CD8-positive, alpha-beta T cell (primary cell): ENCODE measurements at regions of chr6 and their contacts with region 1.

Region 1: GRCh38 chr6:33271458-33272274 is at the starts of genes RPS18 and VPS52:
- DNase-seq: peak; percentile 82 to 99 (median 90)
- ATAC-seq: peak; percentile 85
- H3K4me3 ChIP-seq: peak within 1 kb of the TSS; percentile 74 to 82
- H3K4me3 Mint-ChIP-seq: peak within 1 kb of the TSS; percentile 100
- H3K27ac ChIP-seq: peak within 1 kb of the TSS; percentile 87 to 95
- H3K27ac Mint-ChIP-seq: peak within 1 kb of the TSS; percentile 100
- H3K4me1 ChIP-seq: peaks cover 44% of the 10 kb centered on the region
- H3K4me1 Mint-ChIP-seq: peaks cover 62% of the 10 kb centered on the region
- H3K27me3 ChIP-seq: no peaks in the 10 kb centered on the region
- H3K27me3 Mint-ChIP-seq: no peaks in the 10 kb centered on the region
- CTCF ChIP-seq: no peak
- total RNA-seq, gene RPS18: 4,154 to 4,290 TPM
- total RNA-seq, gene VPS52: 72.2 to 75.9 TPM

Region 2: DNA sequence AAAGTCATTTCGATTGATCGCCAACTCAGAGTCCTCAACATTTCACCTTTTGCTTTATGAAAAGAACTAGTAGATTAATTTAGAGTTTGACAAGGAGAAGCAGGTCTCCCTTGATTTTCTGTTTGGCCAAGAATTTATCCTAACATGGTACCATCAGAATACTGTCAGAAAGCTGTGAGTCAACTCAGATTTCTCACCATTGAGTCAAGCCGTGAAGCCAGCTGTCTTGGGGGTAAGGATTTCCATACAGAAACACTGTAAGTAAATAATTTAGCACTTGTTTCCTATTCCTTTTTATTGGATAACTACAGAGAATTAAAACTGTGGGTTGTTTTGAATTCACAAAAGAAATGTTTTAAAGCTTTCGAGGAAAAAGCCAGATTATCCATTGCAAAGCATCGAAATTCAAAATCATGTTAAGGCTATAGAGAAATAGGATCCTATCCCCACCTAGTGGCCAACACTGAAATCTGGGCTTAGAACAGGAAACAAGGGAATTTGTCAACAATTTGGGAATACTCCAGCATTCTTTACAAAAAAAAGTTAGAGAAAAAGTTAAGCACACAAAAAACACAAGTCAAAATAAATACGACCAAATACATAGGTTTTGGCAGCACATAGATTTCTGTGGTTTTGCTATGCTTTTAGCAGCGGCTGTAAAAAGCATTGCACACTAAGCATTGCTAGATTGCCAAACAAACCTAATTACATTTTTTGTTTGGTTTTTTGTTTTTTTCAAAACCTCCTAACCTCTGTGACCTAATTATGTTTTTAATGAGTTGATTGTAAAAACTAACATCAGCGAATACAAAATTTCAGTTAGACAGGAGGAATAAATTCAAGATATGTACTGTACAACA is 123.6 kb before region 1 on chr6:
- CTCF ChIA-PET with region 1: no interaction called
- POLR2A ChIA-PET with region 1: no interaction called
- intact Hi-C with region 1: no loop called
- DNase-seq: peak in 2 of 9 experiments; percentile 42 to 52
- ATAC-seq: no peak
- H3K4me3 ChIP-seq: no peak overlapping the region
- H3K4me3 Mint-ChIP-seq: no peak overlapping the region
- H3K27ac ChIP-seq: no peak overlapping the region
- H3K27ac Mint-ChIP-seq: no peak overlapping the region
- H3K4me1 ChIP-seq: no peaks in the 10 kb centered on the region
- H3K4me1 Mint-ChIP-seq: peaks cover 2% of the 10 kb centered on the region
- H3K27me3 ChIP-seq: no peaks in the 10 kb centered on the region
- H3K27me3 Mint-ChIP-seq: peaks cover 18% of the 10 kb centered on the region
- CTCF ChIP-seq: peak; percentile 71

Region 3: DNA sequence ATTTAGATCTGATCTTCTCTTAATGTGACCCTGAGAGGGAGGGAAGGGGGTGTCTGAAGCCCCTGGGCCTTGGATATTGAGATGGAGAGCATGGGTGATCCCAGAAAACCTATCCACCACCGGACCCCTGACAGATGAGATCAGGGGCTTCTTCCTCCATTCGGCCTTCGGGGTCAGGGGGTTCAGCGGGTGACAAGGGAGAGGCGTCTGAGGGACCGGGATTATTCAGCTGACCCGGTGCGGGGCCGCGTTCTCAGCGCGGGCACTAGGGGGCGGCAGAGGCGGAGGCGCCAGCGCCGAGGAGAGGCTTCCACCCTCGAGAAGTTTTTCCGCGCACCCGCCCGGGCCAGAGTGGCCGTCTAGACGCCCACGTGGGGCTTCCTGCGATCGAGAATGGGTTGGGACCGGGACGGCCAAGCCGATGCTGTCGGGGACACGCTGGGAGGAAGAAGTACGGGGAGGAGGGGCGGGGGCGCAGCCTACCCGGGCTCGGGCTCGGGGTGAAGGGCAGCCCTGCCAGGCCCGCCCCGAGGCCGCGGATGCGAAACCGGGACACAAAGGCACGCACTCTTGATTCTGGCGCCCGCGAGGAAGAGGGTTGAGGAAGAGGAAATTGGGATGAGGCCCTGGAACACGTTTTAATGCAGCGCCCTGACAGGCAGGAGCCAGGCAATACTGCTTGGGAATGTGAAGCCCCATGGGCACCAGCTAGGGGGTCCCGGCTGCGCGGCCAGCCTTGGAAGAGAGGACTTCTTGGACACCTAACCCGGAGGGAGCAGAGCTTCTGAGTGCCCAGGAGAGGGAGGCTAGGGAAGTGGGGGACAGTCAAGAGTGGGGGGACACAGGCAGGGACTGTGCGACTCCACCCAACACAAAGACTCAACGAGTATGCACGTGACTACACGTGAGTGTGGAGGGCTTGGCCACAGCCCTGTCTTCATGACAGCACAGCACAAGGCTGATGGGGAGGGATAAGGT is 110.0 kb before region 1 on chr6:
- CTCF ChIA-PET with region 1: no interaction called
- POLR2A ChIA-PET with region 1: no interaction called
- intact Hi-C with region 1: no loop called
- DNase-seq: peak; percentile 74 to 91 (median 85)
- ATAC-seq: peak; percentile 97
- H3K4me3 ChIP-seq: peak overlapping the region; percentile 50
- H3K4me3 Mint-ChIP-seq: peak overlapping the region; percentile 86
- H3K27ac ChIP-seq: no peak overlapping the region
- H3K27ac Mint-ChIP-seq: no peak overlapping the region
- H3K4me1 ChIP-seq: peaks cover 8% of the 10 kb centered on the region
- H3K4me1 Mint-ChIP-seq: peaks cover 14% of the 10 kb centered on the region
- H3K27me3 ChIP-seq: no peaks in the 10 kb centered on the region
- H3K27me3 Mint-ChIP-seq: peaks cover 4% of the 10 kb centered on the region
- CTCF ChIP-seq: peak; percentile 92

Region 4: DNA sequence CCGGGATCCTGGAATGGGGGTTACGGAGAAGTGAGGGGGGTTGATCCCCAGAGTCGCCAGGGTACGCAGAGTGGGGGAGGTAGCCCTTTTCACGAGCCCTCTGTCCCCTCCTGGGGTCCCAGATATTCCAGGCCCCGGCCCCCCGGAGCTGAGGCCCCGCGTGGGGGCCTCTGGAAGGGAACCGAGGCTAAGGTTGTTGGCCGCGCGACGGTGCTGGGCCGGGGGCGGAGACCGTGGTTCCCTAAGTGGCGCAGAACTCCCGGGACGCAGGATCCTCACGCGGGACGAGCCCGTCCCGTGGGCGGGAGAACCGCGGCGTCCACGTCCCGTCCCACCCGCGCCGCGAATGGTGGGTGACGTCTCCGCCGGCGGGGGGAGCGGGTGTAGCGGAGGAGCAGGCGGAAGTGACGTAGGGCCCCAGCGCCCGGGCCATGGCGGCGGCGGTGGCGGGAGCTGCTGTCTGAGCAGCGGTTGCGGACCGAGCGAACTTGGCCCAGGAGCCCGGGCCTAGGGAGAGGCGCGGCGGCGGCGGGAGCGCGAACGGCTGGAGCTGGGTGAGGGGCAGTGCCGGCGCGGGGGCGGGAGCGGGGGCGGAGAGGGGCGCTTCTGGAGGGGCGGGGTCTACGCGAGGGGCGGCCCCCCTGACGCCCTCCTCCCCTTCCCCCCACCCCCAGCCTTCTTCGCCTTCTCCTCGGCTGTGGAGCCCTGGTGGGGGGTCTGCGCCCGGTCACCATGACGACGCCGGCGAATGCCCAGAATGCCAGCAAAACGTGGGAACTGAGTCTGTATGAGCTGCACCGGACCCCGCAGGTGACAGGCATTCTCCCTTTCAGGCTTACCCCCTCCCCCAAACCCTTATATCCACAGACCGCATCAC is 63.3 kb before region 1 on chr6 and contains the start of gene RING1:
- CTCF ChIA-PET with region 1: interaction called, 3 read pairs
- POLR2A ChIA-PET with region 1: interaction called, 14 read pairs
- intact Hi-C with region 1: no loop called
- DNase-seq: peak; percentile 72 to 94 (median 87)
- ATAC-seq: peak; percentile 59
- H3K4me3 ChIP-seq: peak within 1 kb of the TSS; percentile 96 to 97
- H3K4me3 Mint-ChIP-seq: peak within 1 kb of the TSS; percentile 94
- H3K27ac ChIP-seq: peak within 1 kb of the TSS; percentile 91 to 98
- H3K27ac Mint-ChIP-seq: peak within 1 kb of the TSS; percentile 96
- H3K4me1 ChIP-seq: peaks cover 51% of the 10 kb centered on the region
- H3K4me1 Mint-ChIP-seq: peaks cover 57% of the 10 kb centered on the region
- H3K27me3 ChIP-seq: peaks cover 0 to 6% of the 10 kb centered on the region in 2 experiments
- H3K27me3 Mint-ChIP-seq: no peaks in the 10 kb centered on the region
- CTCF ChIP-seq: no peak
- total RNA-seq, gene RING1: 29.1 to 29.5 TPM

Region 5: GRCh38 chr6:33317669-33318425 is 46.2 kb after region 1 on chr6 and contains the start of gene ZBTB22:
- CTCF ChIA-PET with region 1: no interaction called
- POLR2A ChIA-PET with region 1: interaction called, 15 read pairs
- intact Hi-C with region 1: loop called (anchors 1 kb)
- DNase-seq: peak; percentile 91 to 98 (median 96)
- ATAC-seq: peak; percentile 61
- H3K4me3 ChIP-seq: peak within 1 kb of the TSS; percentile 72 to 78
- H3K4me3 Mint-ChIP-seq: peak within 1 kb of the TSS; percentile 99
- H3K27ac ChIP-seq: peak within 1 kb of the TSS; percentile 60 to 99
- H3K27ac Mint-ChIP-seq: peak within 1 kb of the TSS; percentile 97
- H3K4me1 ChIP-seq: peaks cover 65% of the 10 kb centered on the region
- H3K4me1 Mint-ChIP-seq: peaks cover 77% of the 10 kb centered on the region
- H3K27me3 ChIP-seq: no peaks in the 10 kb centered on the region
- H3K27me3 Mint-ChIP-seq: no peaks in the 10 kb centered on the region
- CTCF ChIP-seq: no peak
- total RNA-seq, gene ZBTB22: 8.8 to 9.3 TPM

Region 6: DNA sequence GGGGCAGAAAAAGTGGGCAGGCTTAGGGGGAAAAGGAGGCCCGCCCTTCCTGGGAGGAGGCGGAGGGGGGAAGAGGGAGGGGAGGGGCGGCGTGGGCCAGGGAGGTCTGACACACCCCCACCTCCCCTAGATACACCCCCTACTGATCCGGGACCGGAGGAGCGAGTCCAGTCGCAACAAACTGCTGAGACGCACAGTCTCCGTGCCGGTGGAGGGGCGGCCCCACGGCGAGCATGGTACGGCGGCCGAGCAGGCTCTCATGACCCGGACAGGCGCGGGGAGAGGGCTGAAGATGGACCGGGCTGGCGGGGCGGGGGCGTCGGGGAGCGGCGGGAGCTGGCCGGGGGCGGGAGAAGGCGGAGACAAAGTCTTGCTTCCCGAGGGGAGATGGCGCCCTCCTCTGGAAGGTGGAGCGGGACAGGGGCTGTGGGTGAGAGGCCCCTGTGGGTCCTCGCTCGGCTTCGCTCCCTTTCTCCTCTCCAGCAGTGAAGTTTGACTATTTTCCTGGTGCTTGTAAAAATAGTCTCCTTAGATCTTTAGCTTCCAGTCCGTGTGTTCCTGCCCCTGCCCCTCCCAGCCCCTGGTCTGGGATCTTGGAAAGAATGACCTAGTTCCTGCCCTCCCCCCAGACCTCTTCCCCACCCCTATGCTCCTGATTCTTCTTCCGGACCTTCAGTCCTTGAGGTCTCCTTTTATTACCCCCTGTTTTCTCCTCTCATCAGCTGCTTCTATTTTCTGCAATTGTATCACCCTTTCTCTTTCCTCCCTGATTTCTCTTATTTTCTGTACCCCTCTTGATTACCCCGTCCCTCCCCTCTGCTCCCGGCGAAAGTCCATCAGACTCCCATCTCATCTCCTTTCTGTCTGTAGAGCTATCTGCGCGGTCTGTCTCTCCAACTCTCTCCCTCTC is 154.3 kb after region 1 on chr6:
- CTCF ChIA-PET with region 1: no interaction called
- POLR2A ChIA-PET with region 1: interaction called, 17 read pairs
- intact Hi-C with region 1: loop called in 1 of 2 experiments (anchors 5 kb)
- DNase-seq: peak; percentile 57 to 92 (median 84)
- ATAC-seq: peak; percentile 64
- H3K4me3 ChIP-seq: peak overlapping the region; percentile 50 to 69
- H3K4me3 Mint-ChIP-seq: peak overlapping the region; percentile 87
- H3K27ac ChIP-seq: peak overlapping the region; percentile 77 to 91
- H3K27ac Mint-ChIP-seq: peak overlapping the region; percentile 90
- H3K4me1 ChIP-seq: peaks cover 55% of the 10 kb centered on the region
- H3K4me1 Mint-ChIP-seq: peaks cover 77% of the 10 kb centered on the region
- H3K27me3 ChIP-seq: no peaks in the 10 kb centered on the region
- H3K27me3 Mint-ChIP-seq: no peaks in the 10 kb centered on the region
- CTCF ChIP-seq: peak; percentile 40

Region 7: DNA sequence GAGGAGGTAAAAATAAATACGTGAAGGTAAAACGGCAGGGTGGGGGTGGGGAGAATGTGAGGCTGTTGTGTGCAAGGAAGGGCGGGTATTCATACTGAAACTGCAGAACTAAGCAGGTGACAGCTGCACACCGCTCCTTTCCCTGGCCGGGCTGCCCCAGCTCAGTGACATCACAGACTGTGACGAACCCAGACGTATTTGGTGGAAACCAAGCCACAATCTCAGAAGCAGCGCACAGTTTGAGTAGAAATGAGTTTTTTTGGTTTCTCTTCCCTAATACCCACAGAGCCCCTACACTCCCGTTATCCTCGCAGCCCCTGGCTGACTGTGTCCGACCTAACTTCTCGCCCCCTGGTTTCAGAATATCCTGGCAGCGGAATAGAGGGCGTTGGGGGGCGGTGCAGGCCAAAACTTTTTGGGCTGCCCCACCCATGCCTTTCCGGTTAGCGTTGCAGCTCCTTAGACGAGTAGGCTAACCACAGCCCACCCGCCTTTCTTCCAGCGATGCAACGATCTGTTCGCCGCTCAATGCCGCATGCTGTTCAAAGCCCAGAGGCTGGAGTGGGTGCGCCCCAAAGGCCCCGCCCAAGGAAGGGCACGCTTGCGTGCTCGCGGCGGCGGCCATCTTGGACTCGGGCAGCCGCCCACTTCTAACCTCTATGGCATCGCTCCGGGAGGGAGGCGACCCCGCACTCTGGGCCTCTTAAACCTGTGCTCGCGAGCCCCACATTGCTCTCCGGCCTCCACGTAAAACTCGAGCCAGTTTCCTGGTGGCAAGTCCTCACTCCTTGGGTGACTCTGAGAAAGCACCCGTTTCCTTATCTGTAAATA is 299.4 kb after region 1 on chr6:
- CTCF ChIA-PET with region 1: interaction called, 3 read pairs
- POLR2A ChIA-PET with region 1: interaction called, 3 read pairs
- intact Hi-C with region 1: loop called (anchors 5 kb)
- DNase-seq: peak; percentile 86 to 98 (median 92)
- ATAC-seq: peak; percentile 86
- H3K4me3 ChIP-seq: peak overlapping the region; percentile 57 to 67
- H3K4me3 Mint-ChIP-seq: peak overlapping the region; percentile 92
- H3K27ac ChIP-seq: peak overlapping the region; percentile 93 to 99
- H3K27ac Mint-ChIP-seq: peak overlapping the region; percentile 100
- H3K4me1 ChIP-seq: peaks cover 20% of the 10 kb centered on the region
- H3K4me1 Mint-ChIP-seq: peaks cover 29% of the 10 kb centered on the region
- H3K27me3 ChIP-seq: no peaks in the 10 kb centered on the region
- H3K27me3 Mint-ChIP-seq: no peaks in the 10 kb centered on the region
- CTCF ChIP-seq: no peak